Aorta (tissue), 5 donors: ENCODE measurements at regions of chr2 and their contacts with region 1.

Region 1: GRCh38 chr2:69177785-69178636 is 165.0 kb downstream of the ANTXR1 start:
- DNase-seq: peak; percentile 97 to 98
- ATAC-seq: peak; percentile 95
- H3K4me3 ChIP-seq: no peak overlapping the region
- H3K27ac ChIP-seq: peak overlapping the region; percentile 85 to 86
- H3K4me1 ChIP-seq: peaks cover 2 to 6% of the 10 kb centered on the region in 2 donors
- H3K27me3 ChIP-seq: no peaks in the 10 kb centered on the region

Region 2: GRCh38 chr2:69149631-69150215 is 28.3 kb before region 1 on chr2:
- intact Hi-C with region 1: loop called in 1 of 2 experiments (anchors 1 kb)
- DNase-seq: peak; percentile 81 to 89
- ATAC-seq: peak; percentile 54
- H3K4me3 ChIP-seq: no peak overlapping the region
- H3K27ac ChIP-seq: peak overlapping the region in 1 of 2 donors; percentile 87
- H3K4me1 ChIP-seq: peaks cover 2 to 10% of the 10 kb centered on the region in 2 donors
- H3K27me3 ChIP-seq: no peaks in the 10 kb centered on the region

Region 3: DNA sequence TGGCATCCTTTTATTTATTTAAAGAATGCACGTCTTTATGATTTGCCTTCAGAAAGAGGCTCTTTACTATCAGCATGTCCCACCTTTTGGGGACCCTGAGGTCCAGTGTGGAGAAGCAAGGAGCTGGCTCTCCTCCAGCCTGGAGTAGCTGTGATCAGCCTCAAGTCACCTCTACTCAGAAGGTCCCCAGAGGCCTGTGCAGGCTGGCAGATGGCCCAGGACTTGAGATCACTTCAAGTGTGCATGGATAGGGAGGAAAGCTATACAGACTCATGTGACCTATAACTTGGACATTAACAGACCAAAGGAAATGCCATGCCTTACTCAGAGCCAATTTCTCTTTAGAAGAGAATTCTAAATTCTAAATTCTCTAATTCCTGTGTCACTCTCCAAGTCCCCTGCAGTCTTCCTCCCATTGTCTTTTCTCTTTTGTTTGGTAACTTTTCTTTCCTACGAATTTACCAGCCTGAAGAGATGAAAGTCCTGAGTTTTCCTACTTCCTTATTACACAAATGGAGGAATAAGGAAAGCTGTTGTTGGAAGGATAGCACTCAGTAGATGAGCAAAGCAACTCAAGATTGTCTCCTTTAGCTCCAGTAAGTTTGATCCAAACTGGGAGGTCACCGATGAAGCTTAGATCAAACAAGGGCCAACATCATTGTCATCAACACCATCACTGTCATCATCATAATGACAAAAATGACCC is 45.1 kb after region 1 on chr2:
- intact Hi-C with region 1: loop called in 1 of 2 experiments (anchors 5 kb)
- DNase-seq: peak; percentile 80 to 91
- ATAC-seq: no peak
- H3K4me3 ChIP-seq: no peak overlapping the region
- H3K27ac ChIP-seq: peak overlapping the region; percentile 49 to 51
- H3K4me1 ChIP-seq: peaks cover 8 to 11% of the 10 kb centered on the region in 2 donors
- H3K27me3 ChIP-seq: no peaks in the 10 kb centered on the region